CD8-positive, alpha-beta memory T cell (primary cell): ENCODE measurements at regions of chr22 and their contacts with region 1.

Region 1: DNA sequence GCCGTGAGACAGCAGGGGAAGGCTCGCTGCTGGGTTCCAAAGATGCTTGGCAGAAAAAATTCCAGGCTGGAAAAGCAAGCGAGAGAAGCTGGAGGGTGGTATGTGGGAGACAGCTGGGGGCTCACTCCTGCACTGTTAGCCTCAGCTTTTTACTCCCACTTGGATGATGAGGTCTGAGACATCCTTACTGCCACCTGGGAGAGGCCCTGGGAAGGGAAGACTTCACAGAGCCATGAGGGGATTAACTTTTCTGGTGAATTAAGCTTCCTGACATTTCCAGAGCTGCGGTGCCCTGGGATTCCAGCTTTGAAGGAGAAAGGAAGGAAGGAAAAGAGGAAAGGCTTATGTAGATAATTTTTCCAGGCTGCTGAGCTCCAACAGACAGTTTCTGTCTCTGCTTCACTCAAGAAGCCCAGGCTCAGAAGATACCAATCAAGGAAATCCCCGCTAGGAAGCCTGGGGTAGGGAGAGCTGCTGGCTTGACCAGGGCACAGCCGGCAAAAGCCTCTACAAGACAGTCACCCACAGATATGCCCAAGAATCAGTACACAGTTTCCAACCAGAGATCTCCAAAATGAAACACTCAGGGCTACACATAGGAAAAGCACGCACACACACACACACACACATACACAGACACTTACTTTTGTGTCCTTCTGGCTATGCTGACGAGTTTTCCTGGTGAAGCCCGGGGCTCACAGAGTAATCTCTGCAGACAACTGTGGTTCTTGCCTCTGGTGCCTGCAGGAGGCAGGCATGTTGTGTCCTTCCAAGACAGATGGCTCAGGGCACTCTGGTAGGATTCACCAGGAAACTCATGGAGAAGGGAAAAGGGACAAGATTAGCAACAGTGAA is 907 bp downstream of the MCHR1 start:
- DNase-seq: no peak
- H3K4me3 ChIP-seq: no peak overlapping the region
- H3K4me3 Mint-ChIP-seq: no peak overlapping the region
- H3K27ac ChIP-seq: no peak overlapping the region
- H3K27ac Mint-ChIP-seq: peak overlapping the region in 3 of 8 donors; percentile 3 to 54 (median 38)
- H3K4me1 ChIP-seq: no peaks in the 10 kb centered on the region
- H3K4me1 Mint-ChIP-seq: peaks cover 5 to 7% (median 6%) of the 10 kb centered on the region in 3 donors
- H3K27me3 ChIP-seq: peaks cover 5% of the 10 kb centered on the region
- H3K27me3 Mint-ChIP-seq: peaks cover 11 to 20% of the 10 kb centered on the region in 2 donors

Region 2: GRCh38 chr22:40636380-40637182 is 43.6 kb before region 1 on chr22 and contains the start of gene MRTFA:
- CTCF ChIA-PET with region 1: no interaction called
- POLR2A ChIA-PET with region 1: no interaction called
- DNase-seq: peak; percentile 98 to 100 (median 99)
- H3K4me3 ChIP-seq: peak within 1 kb of the TSS; percentile 97
- H3K4me3 Mint-ChIP-seq: peak within 1 kb of the TSS; percentile 91 to 99 (median 95)
- H3K27ac ChIP-seq: peak within 1 kb of the TSS; percentile 96
- H3K27ac Mint-ChIP-seq: peak within 1 kb of the TSS; percentile 87 to 98 (median 98)
- H3K4me1 ChIP-seq: peaks cover 28% of the 10 kb centered on the region
- H3K4me1 Mint-ChIP-seq: peaks cover 37 to 48% (median 48%) of the 10 kb centered on the region in 3 donors
- H3K27me3 ChIP-seq: no peaks in the 10 kb centered on the region
- H3K27me3 Mint-ChIP-seq: no peaks in the 10 kb centered on the region
- total RNA-seq, gene MRTFA: 38.6 to 40.5 TPM

Region 3: GRCh38 chr22:40654522-40655167 is 25.5 kb before region 1 on chr22:
- CTCF ChIA-PET with region 1: no interaction called
- POLR2A ChIA-PET with region 1: no interaction called
- DNase-seq: no peak
- H3K4me3 ChIP-seq: no peak overlapping the region
- H3K4me3 Mint-ChIP-seq: no peak overlapping the region
- H3K27ac ChIP-seq: no peak overlapping the region
- H3K27ac Mint-ChIP-seq: no peak overlapping the region
- H3K4me1 ChIP-seq: no peaks in the 10 kb centered on the region
- H3K4me1 Mint-ChIP-seq: peaks cover 5 to 8% (median 8%) of the 10 kb centered on the region in 3 donors
- H3K27me3 ChIP-seq: no peaks in the 10 kb centered on the region
- H3K27me3 Mint-ChIP-seq: peaks cover 0 to 2% of the 10 kb centered on the region in 2 donors

Region 4: GRCh38 chr22:40714192-40714951 is 34.2 kb after region 1 on chr22:
- CTCF ChIA-PET with region 1: interaction called, 17 read pairs
- POLR2A ChIA-PET with region 1: no interaction called
- DNase-seq: no peak
- H3K4me3 ChIP-seq: no peak overlapping the region
- H3K4me3 Mint-ChIP-seq: no peak overlapping the region
- H3K27ac ChIP-seq: no peak overlapping the region
- H3K27ac Mint-ChIP-seq: no peak overlapping the region
- H3K4me1 ChIP-seq: peaks cover 9% of the 10 kb centered on the region
- H3K4me1 Mint-ChIP-seq: peaks cover 10 to 20% (median 12%) of the 10 kb centered on the region in 3 donors
- H3K27me3 ChIP-seq: no peaks in the 10 kb centered on the region
- H3K27me3 Mint-ChIP-seq: peaks cover 4 to 6% of the 10 kb centered on the region in 2 donors

Region 5: GRCh38 chr22:40728731-40729189 is 48.6 kb after region 1 on chr22:
- CTCF ChIA-PET with region 1: interaction called, 18 read pairs
- POLR2A ChIA-PET with region 1: interaction called, 8 read pairs
- DNase-seq: peak; percentile 14 to 84 (median 50)
- H3K4me3 ChIP-seq: peak overlapping the region; percentile 35
- H3K4me3 Mint-ChIP-seq: peak overlapping the region; percentile 4 to 89 (median 78)
- H3K27ac ChIP-seq: no peak overlapping the region
- H3K27ac Mint-ChIP-seq: peak overlapping the region; percentile 69 to 98 (median 94)
- H3K4me1 ChIP-seq: peaks cover 68% of the 10 kb centered on the region
- H3K4me1 Mint-ChIP-seq: peaks cover 34 to 55% (median 50%) of the 10 kb centered on the region in 3 donors
- H3K27me3 ChIP-seq: no peaks in the 10 kb centered on the region
- H3K27me3 Mint-ChIP-seq: no peaks in the 10 kb centered on the region

Region 6: GRCh38 chr22:40739721-40740120 is 59.5 kb after region 1 on chr22:
- CTCF ChIA-PET with region 1: interaction called, 10 read pairs
- POLR2A ChIA-PET with region 1: interaction called, 3 read pairs
- DNase-seq: no peak
- H3K4me3 ChIP-seq: no peak overlapping the region
- H3K4me3 Mint-ChIP-seq: no peak overlapping the region
- H3K27ac ChIP-seq: no peak overlapping the region
- H3K27ac Mint-ChIP-seq: peak overlapping the region in 1 of 8 donors; percentile 57
- H3K4me1 ChIP-seq: no peaks in the 10 kb centered on the region
- H3K4me1 Mint-ChIP-seq: no peaks in the 10 kb centered on the region
- H3K27me3 ChIP-seq: no peaks in the 10 kb centered on the region
- H3K27me3 Mint-ChIP-seq: peaks cover 0 to 1% of the 10 kb centered on the region in 2 donors

Region 7: GRCh38 chr22:40748388-40748970 is 68.3 kb after region 1 on chr22:
- CTCF ChIA-PET with region 1: interaction called, 12 read pairs
- POLR2A ChIA-PET with region 1: no interaction called
- DNase-seq: no peak
- H3K4me3 ChIP-seq: no peak overlapping the region
- H3K4me3 Mint-ChIP-seq: no peak overlapping the region
- H3K27ac ChIP-seq: no peak overlapping the region
- H3K27ac Mint-ChIP-seq: no peak overlapping the region
- H3K4me1 ChIP-seq: no peaks in the 10 kb centered on the region
- H3K4me1 Mint-ChIP-seq: no peaks in the 10 kb centered on the region
- H3K27me3 ChIP-seq: no peaks in the 10 kb centered on the region
- H3K27me3 Mint-ChIP-seq: peaks cover 0 to 4% of the 10 kb centered on the region in 2 donors

Region 8: DNA sequence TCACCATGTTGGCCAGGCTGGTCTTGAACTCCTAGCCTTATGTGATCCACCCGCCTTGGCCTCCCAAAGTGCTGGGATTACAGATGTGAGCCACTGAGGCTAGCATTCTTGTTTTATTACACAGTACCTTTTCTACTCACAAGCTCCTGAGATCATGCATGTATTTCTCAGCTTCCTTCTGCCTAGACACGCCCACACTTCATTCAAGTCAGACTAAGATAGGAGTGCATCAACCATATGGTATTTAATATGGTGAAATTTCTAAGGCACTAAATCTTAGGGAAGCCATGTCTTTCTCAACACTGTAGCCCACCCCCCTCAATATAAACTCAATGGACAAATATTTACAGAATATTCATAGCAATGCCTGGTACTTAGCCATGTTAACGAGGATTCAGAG is 76.9 kb after region 1 on chr22:
- CTCF ChIA-PET with region 1: interaction called, 57 read pairs
- POLR2A ChIA-PET with region 1: interaction called, 3 read pairs
- DNase-seq: no peak
- H3K4me3 ChIP-seq: no peak overlapping the region
- H3K4me3 Mint-ChIP-seq: no peak overlapping the region
- H3K27ac ChIP-seq: no peak overlapping the region
- H3K27ac Mint-ChIP-seq: no peak overlapping the region
- H3K4me1 ChIP-seq: no peaks in the 10 kb centered on the region
- H3K4me1 Mint-ChIP-seq: no peaks in the 10 kb centered on the region
- H3K27me3 ChIP-seq: no peaks in the 10 kb centered on the region
- H3K27me3 Mint-ChIP-seq: peaks cover 0 to under 1% of the 10 kb centered on the region in 2 donors